ENCODE measurements at regions of chr5 and their contacts with region 1.

Region 1: DNA sequence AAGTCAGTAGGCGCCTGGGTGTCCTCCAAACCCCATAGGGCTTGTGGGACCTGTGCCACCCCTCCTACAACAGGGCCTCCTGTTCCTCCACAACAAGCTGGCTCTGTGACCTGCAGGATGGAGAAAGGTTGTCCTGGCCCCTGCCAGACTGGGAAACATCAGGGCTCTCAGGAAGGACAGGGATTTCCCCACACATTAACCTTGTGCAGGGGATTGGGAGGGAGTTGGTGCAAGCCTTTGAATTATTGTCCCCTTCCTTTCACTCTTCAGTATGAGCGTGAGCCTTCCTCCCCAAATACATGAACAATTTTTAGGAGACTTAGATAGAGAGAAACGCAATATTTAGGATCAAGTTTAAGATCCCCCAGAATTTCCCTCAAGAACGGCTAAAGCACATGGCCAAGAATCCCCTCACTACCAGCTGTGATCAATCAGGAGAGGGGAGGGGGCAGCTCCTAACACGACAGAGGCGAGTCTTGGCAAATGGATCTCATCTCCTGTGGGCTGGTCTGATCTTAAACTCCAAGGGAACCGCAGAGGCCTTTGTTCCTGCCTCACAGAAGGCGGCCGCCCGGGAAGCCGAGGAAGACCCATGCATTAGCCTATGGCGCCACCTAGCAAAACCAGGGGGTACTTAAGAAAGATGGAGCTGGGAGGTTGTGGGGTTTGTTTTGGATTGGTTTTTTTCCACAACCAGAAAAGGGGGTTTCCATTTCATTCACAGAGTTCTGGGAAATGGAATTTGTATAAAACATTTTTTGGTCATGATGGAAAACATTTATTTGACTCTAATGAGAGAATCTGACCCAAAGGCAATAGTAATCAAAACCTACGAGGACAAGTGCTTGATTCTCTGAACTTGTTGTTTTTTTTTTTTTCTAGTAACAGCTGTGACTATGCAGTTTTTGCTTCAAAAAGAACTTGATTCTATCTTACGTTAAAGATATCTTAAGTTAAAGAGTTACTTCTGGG is 36.1 kb upstream of the OSMR start:
- DNase-seq: peak; percentile 80

Region 2: DNA sequence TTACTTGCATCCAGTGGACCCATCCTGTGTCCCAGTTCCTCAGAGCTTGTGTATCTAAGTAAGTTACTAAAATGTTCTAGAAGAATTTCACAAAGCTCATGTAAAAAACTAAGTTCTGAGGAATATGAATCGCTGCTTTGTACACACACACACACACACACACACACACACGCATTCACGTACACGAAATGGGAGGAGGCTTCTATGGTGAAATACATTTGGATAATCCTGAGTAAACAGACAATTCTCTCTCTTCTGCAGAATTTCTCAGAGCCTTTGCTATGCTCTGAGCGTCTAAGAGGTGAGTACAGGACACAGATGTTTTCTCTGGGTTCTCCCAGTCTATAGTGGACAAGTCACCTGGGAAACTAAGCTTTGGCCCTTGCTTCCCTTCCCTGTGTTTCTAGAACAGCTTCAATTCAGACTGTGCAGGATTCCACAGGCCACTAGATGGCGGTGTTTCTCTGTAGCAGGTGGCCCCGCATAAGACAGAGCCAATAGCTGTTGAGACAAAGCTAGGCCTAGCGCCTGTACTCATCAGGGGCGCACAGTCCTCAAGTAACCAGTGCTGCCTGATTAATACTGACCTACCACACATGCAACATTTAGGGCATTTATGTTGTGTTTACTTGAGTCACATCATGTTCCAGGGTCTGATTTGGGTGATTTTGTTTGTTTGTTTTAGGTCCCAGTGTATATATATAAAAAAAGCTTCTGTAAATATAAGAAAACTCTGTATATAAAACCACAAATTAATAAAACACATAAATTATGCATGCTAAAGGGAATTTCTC is 368.0 kb before region 1 on chr5:
- in situ Hi-C with region 1: loop called (anchors 10 kb)
- DNase-seq: peak; percentile 94

Region 3: GRCh38 chr5:38639377-38640332 is 170.0 kb before region 1 on chr5:
- in situ Hi-C with region 1: no loop called
- DNase-seq: no peak